B cell (primary cell): ENCODE measurements at regions of chr9 and their contacts with region 1.

Region 1: GRCh38 chr9:114434878-114435311 is 47.1 kb upstream of the AKNA start:
- DNase-seq: peak; percentile 70
- ATAC-seq: peak; percentile 76
- H3K4me3 ChIP-seq: no peak overlapping the region
- H3K4me3 Mint-ChIP-seq: no peak overlapping the region
- H3K27ac ChIP-seq: no peak overlapping the region
- H3K27ac Mint-ChIP-seq: no peak overlapping the region
- H3K4me1 ChIP-seq: no peaks in the 10 kb centered on the region
- H3K4me1 Mint-ChIP-seq: peaks cover 2% of the 10 kb centered on the region
- H3K27me3 ChIP-seq: peaks cover 0 to under 1% (median 0%) of the 10 kb centered on the region in 4 experiments
- H3K27me3 Mint-ChIP-seq: peaks cover 5% of the 10 kb centered on the region
- CTCF ChIP-seq: peak; percentile 72

Region 2: DNA sequence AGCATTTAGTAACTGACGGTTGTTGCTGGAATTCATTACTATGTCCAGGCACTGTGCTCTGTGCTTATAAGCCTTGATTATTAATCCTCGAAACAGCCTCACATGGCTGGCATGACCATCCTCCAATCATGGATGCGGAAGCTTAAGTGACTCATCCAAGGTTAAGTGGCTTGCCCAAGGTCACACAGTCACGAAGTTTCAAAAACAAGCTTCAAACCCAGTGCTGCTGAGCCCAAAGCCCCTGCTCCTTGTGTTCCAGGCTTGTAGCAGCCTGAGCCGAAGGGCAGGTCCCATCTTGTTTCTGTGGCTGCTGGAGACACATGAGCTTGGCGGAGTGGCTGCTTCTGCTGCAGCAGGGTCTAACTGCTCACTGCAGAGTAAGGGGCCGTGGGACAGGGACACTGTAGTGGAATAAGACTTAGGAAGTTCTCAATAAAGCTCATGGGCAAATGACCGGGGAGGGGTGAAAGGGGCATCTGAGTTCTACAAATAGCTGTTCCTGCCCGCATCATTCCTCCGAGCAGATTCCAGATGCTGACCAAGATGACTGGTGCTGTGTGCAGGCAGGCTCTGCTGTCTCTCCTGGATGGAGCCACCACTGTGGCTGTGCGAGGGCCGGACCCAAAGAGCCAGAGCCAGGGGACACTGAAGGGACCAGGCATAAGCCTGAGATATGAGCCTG is 38.0 kb after region 1 on chr9:
- CTCF ChIA-PET with region 1: interaction called, 10 read pairs
- POLR2A ChIA-PET with region 1: no interaction called
- intact Hi-C with region 1: no loop called
- DNase-seq: no peak
- ATAC-seq: no peak
- H3K4me3 ChIP-seq: no peak overlapping the region
- H3K4me3 Mint-ChIP-seq: no peak overlapping the region
- H3K27ac ChIP-seq: no peak overlapping the region
- H3K27ac Mint-ChIP-seq: no peak overlapping the region
- H3K4me1 ChIP-seq: peaks cover 14 to 23% of the 10 kb centered on the region in 2 donors
- H3K4me1 Mint-ChIP-seq: peaks cover 20% of the 10 kb centered on the region
- H3K27me3 ChIP-seq: peaks cover 0 to 7% (median 2%) of the 10 kb centered on the region in 4 experiments
- H3K27me3 Mint-ChIP-seq: no peaks in the 10 kb centered on the region
- CTCF ChIP-seq: no peak

Region 3: DNA sequence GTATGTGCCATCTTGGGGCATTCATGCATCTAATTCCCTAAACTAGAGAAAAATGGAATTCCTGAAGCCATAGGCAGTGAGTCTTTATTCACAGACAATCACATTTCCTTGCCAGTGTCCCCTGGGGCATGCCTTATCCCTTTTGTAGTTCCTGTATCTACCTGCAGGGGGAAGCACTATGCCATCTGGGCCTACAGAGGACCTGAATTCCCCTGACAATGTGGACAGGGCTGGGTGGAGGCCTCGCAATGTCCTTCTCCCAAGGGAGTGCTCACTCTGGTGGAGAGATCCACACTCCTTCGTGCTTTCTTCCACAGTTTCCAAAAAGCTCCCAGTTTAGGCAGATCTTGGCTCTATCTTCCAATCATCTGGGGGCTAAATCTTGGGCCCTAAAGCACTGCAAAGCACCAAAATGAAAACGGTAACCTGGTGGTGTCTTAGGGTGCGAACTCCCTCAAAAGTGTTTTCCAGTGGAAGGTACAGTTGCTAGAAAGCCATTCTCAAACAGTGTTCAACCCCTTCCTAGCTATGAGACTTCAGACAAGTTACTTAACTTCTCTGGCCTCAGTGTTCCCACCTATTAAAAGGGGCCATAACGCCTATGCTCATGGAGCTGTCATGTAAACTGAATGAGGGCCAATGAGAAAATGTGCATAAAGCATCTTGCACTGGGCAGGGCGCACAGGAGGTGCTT is 52.9 kb after region 1 on chr9:
- CTCF ChIA-PET with region 1: interaction called, 39 read pairs
- POLR2A ChIA-PET with region 1: no interaction called
- intact Hi-C with region 1: no loop called
- DNase-seq: peak; percentile 81
- ATAC-seq: peak; percentile 75
- H3K4me3 ChIP-seq: no peak overlapping the region
- H3K4me3 Mint-ChIP-seq: no peak overlapping the region
- H3K27ac ChIP-seq: no peak overlapping the region
- H3K27ac Mint-ChIP-seq: peak overlapping the region; percentile 16
- H3K4me1 ChIP-seq: peaks cover 22 to 23% of the 10 kb centered on the region in 2 donors
- H3K4me1 Mint-ChIP-seq: peaks cover 40% of the 10 kb centered on the region
- H3K27me3 ChIP-seq: no peaks in the 10 kb centered on the region
- H3K27me3 Mint-ChIP-seq: no peaks in the 10 kb centered on the region
- CTCF ChIP-seq: peak; percentile 90

Region 4: GRCh38 chr9:114505187-114506081 is 70.5 kb after region 1 on chr9 and contains the start of gene WHRN:
- CTCF ChIA-PET with region 1: interaction called, 212 read pairs
- POLR2A ChIA-PET with region 1: interaction called, 3 read pairs
- intact Hi-C with region 1: loop called (anchors 1 kb)
- DNase-seq: peak; percentile 95
- ATAC-seq: peak; percentile 85
- H3K4me3 ChIP-seq: peak within 1 kb of the TSS; percentile 53 to 77 (median 65)
- H3K4me3 Mint-ChIP-seq: peak within 1 kb of the TSS; percentile 90
- H3K27ac ChIP-seq: peak within 1 kb of the TSS in 1 of 2 donors; percentile 62
- H3K27ac Mint-ChIP-seq: peak within 1 kb of the TSS; percentile 90
- H3K4me1 ChIP-seq: peaks cover 29 to 41% of the 10 kb centered on the region in 2 donors
- H3K4me1 Mint-ChIP-seq: peaks cover 43% of the 10 kb centered on the region
- H3K27me3 ChIP-seq: peaks cover 0 to 17% (median 9%) of the 10 kb centered on the region in 4 experiments
- H3K27me3 Mint-ChIP-seq: peaks cover 29% of the 10 kb centered on the region
- CTCF ChIP-seq: no peak
- total RNA-seq, gene WHRN: 95.7 and 96.6 TPM in 2 replicates

Region 5: GRCh38 chr9:114538241-114538640 is 103.3 kb after region 1 on chr9:
- CTCF ChIA-PET with region 1: interaction called, 38 read pairs
- POLR2A ChIA-PET with region 1: no interaction called
- intact Hi-C with region 1: no loop called
- DNase-seq: peak; percentile 74
- ATAC-seq: peak; percentile 99
- H3K4me3 ChIP-seq: no peak overlapping the region
- H3K4me3 Mint-ChIP-seq: no peak overlapping the region
- H3K27ac ChIP-seq: peak overlapping the region in 1 of 2 donors; percentile 0
- H3K27ac Mint-ChIP-seq: peak overlapping the region; percentile 38
- H3K4me1 ChIP-seq: peaks cover 8 to 13% of the 10 kb centered on the region in 2 donors
- H3K4me1 Mint-ChIP-seq: peaks cover 27% of the 10 kb centered on the region
- H3K27me3 ChIP-seq: no peaks in the 10 kb centered on the region
- H3K27me3 Mint-ChIP-seq: no peaks in the 10 kb centered on the region
- CTCF ChIP-seq: peak; percentile 68

Region 6: GRCh38 chr9:114718801-114719221 is 283.9 kb after region 1 on chr9:
- CTCF ChIA-PET with region 1: no interaction called
- POLR2A ChIA-PET with region 1: no interaction called
- intact Hi-C with region 1: no loop called
- DNase-seq: no peak
- ATAC-seq: no peak
- H3K4me3 ChIP-seq: no peak overlapping the region
- H3K4me3 Mint-ChIP-seq: no peak overlapping the region
- H3K27ac ChIP-seq: no peak overlapping the region
- H3K27ac Mint-ChIP-seq: no peak overlapping the region
- H3K4me1 ChIP-seq: no peaks in the 10 kb centered on the region
- H3K4me1 Mint-ChIP-seq: peaks cover 11% of the 10 kb centered on the region
- H3K27me3 ChIP-seq: peaks cover 0 to 24% (median 7%) of the 10 kb centered on the region in 4 experiments
- H3K27me3 Mint-ChIP-seq: peaks cover 31% of the 10 kb centered on the region
- CTCF ChIP-seq: no peak

Region 7: GRCh38 chr9:115013998-115014397 is 579.1 kb after region 1 on chr9:
- CTCF ChIA-PET with region 1: interaction called, 4 read pairs
- POLR2A ChIA-PET with region 1: no interaction called
- intact Hi-C with region 1: loop called (anchors 10 kb)
- DNase-seq: peak; percentile 81
- ATAC-seq: peak; percentile 65
- H3K4me3 ChIP-seq: no peak overlapping the region
- H3K4me3 Mint-ChIP-seq: no peak overlapping the region
- H3K27ac ChIP-seq: no peak overlapping the region
- H3K27ac Mint-ChIP-seq: no peak overlapping the region
- H3K4me1 ChIP-seq: no peaks in the 10 kb centered on the region
- H3K4me1 Mint-ChIP-seq: peaks cover 3% of the 10 kb centered on the region
- H3K27me3 ChIP-seq: no peaks in the 10 kb centered on the region
- H3K27me3 Mint-ChIP-seq: peaks cover 24% of the 10 kb centered on the region
- CTCF ChIP-seq: peak; percentile 91